K562 (cell line): ENCODE measurements at regions of chr1 and their contacts with region 1.

Region 1: DNA sequence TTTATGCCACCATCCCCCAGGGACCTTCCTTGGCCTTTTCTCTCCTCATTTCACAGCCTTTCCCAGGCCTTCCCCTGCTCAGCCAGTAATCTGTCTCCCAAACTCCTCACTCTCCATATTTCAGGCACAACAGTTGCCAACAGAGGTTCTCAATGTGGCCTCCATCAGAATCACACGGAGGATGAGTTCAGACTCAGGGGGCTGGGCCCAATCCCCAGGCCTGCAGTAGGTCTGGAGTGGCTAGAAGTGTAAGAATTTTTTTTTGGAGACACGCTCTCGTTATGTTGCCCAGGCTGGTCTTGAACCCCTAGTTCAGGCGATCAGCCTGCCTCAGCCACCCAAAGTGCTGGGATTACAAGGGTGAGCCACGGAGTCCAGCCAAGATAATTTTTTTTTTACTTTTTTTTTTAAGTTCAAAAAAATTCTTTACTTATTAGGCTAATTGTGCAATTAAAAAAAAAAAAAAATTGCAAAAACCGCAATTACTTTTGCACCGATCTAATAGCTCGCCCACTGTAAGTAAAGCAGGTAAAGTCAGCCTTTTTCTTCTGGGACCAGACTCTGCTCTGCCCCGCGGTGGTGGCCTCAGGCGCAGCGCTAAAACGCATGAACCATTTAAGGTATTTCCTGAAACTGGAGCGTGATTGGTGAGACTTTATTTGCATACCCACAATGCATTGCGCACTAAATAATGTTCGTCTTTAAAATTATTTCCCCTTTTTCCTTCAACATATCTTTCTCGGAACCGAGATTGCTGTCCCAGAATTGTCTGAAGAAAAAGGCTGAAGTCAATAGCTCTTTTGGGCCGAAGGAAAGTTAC is 18.7 kb downstream of the KIAA2013 start:
- DNase-seq: peak; percentile 86 to 98 (median 90)
- ATAC-seq: peak; percentile 72
- H3K4me3 ChIP-seq: no peak overlapping the region
- H3K27ac ChIP-seq: peak overlapping the region; percentile 100
- H3K4me1 ChIP-seq: peaks cover 15 to 27% of the 10 kb centered on the region in 2 experiments
- H3K27me3 ChIP-seq: no peaks in the 10 kb centered on the region
- CTCF ChIP-seq: peak; percentile 87 to 98 (median 96)
- EP300 ChIP-seq: no peak
- POLR2A ChIP-seq: no peak
- RAD21 ChIP-seq: peak; percentile 61 to 78

Region 2: DNA sequence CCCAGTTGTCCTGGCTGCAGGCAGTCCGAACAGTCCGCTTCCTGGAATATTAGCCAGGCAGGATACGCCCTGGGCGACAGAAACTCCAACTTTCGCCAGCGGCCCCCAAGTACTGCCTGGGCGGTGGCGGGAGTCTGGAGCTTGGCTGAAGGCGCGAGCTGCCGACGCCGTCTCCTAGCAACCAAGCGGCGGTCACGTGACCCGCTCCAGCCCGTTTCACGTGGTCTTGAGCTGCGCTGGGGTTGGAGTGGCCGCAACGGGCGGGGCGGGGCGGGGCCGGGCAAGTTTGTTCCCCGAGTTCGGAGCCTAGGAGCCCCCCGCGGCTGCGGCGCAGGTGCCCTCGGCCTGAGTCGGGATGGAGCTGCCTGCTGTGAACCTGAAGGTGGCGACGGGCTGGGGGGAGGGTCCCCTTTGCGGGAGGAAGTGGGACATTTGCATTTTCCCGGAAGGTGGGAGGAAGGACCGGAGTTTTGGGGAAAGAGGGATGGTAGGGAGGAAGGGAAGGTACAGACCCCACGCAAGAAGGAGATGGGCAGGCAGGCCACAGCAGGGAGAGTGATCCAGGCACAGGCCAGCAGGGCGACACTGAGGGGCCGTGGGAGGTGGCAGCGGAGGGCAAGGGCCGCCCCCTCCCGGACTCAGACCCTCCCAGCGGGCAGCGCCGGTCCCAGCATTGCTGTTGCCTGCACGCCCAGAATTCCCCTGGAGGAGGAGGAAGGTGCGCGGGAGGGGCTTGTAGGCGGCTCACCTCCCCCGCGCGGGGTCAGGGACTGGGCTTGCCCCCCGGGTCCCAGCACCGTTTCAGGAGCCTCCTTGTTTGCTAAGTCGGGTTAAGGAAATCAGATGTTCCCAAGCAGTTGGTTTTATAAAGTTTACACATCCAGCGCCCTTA is 171.4 kb before region 1 on chr1 and contains the start of gene AGTRAP:
- CTCF ChIA-PET with region 1: interaction called, 3 read pairs
- POLR2A ChIA-PET with region 1: interaction called, 23 read pairs
- in situ Hi-C with region 1: no loop called
- intact Hi-C with region 1: no loop called
- DNase-seq: peak; percentile 95 to 99 (median 96)
- ATAC-seq: peak; percentile 84
- H3K4me3 ChIP-seq: peak within 1 kb of the TSS; percentile 69
- H3K27ac ChIP-seq: peak within 1 kb of the TSS; percentile 91
- H3K4me1 ChIP-seq: peaks cover 49 to 50% of the 10 kb centered on the region in 2 experiments
- H3K27me3 ChIP-seq: no peaks in the 10 kb centered on the region
- CTCF ChIP-seq: peak; percentile 13 to 19 (median 18); a peak in 2 of 6 replicates
- EP300 ChIP-seq: peak; percentile 27; the same call in 1 of the 2 replicates
- POLR2A ChIP-seq: peak; percentile 81
- RAD21 ChIP-seq: no peak
- polyA plus RNA-seq, gene AGTRAP: 31.4 to 51.5 TPM

Region 3: GRCh38 chr1:11822096-11822495 is 85.4 kb before region 1 on chr1:
- CTCF ChIA-PET with region 1: interaction called, 5 read pairs
- POLR2A ChIA-PET with region 1: interaction called, 41 read pairs
- in situ Hi-C with region 1: no loop called
- intact Hi-C with region 1: no loop called
- DNase-seq: no peak
- ATAC-seq: no peak
- H3K4me3 ChIP-seq: no peak overlapping the region
- H3K27ac ChIP-seq: no peak overlapping the region
- H3K4me1 ChIP-seq: no peaks in the 10 kb centered on the region
- H3K27me3 ChIP-seq: no peaks in the 10 kb centered on the region
- CTCF ChIP-seq: no peak
- EP300 ChIP-seq: no peak
- POLR2A ChIP-seq: no peak
- RAD21 ChIP-seq: no peak

Region 4: GRCh38 chr1:11882814-11883538 is 24.5 kb before region 1 on chr1:
- CTCF ChIA-PET with region 1: interaction called, 3 read pairs
- POLR2A ChIA-PET with region 1: interaction called, 159 read pairs
- in situ Hi-C with region 1: no loop called
- intact Hi-C with region 1: loop called (anchors 1 kb)
- DNase-seq: peak; percentile 98 to 99 (median 98)
- ATAC-seq: peak; percentile 94
- H3K4me3 ChIP-seq: no peak overlapping the region
- H3K27ac ChIP-seq: peak overlapping the region; percentile 82
- H3K4me1 ChIP-seq: peaks cover 48 to 70% of the 10 kb centered on the region in 2 experiments
- H3K27me3 ChIP-seq: no peaks in the 10 kb centered on the region
- CTCF ChIP-seq: no peak
- EP300 ChIP-seq: peak; percentile 93
- POLR2A ChIP-seq: peak; percentile 75
- RAD21 ChIP-seq: peak in 1 of 2 experiments; percentile 47; a peak in 2 of 4 replicates

Region 5: GRCh38 chr1:11961230-11961629 is 53.7 kb after region 1 on chr1:
- CTCF ChIA-PET with region 1: no interaction called
- POLR2A ChIA-PET with region 1: interaction called, 112 read pairs
- in situ Hi-C with region 1: loop called (anchors 5 kb)
- intact Hi-C with region 1: no loop called
- DNase-seq: no peak
- ATAC-seq: no peak
- H3K4me3 ChIP-seq: no peak overlapping the region
- H3K27ac ChIP-seq: no peak overlapping the region
- H3K4me1 ChIP-seq: peaks cover 0 to 10% of the 10 kb centered on the region in 2 experiments; a peak in 1 of 5 replicates
- H3K27me3 ChIP-seq: no peaks in the 10 kb centered on the region
- CTCF ChIP-seq: no peak
- EP300 ChIP-seq: no peak
- POLR2A ChIP-seq: no peak
- RAD21 ChIP-seq: no peak

Region 6: DNA sequence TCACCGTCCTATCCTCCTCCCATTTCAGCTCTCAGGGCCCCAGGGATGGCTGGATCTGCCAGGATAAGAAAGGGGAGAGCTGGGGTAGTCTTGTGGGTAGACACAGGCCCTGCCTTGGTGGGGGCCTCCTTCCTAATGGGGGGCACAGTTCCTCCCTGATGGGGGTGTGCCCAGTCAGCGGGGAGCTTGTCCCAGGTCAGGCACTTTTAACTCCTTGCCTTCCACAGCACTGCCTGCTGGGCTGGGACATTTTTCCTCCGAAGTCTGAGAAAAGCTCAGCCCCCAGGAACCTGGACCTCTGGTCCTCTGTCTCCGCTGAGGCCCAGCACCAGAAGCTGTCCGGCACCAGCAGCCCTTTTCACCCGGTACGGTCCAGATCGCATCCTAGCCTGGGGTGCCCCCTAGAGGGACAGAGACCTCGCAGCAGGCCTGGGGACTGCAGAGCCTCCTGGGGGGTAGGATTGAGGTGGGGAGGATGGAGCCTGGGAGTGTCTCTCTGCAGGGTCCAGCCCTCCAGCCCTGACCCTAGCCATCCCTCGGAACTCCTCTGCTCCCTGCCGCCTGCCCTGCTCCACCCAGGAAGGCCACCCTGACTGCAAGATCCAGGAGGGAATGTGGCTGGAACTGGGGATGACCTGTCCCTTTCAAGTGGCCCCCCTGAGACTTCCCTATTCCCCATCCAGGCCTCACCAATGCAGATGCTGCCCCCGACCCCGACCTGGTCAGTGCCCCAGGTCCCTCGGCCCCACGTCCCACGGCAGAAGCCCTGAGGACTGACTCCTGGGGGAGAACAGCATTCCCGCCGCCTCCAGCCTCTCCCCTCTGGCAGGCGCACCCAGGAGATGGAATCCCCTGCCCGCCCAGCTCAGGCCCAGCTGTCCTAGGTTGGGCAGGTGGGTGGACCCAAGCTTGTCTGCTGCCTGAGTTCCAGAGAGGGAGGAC is 123.8 kb after region 1 on chr1:
- CTCF ChIA-PET with region 1: no interaction called
- POLR2A ChIA-PET with region 1: interaction called, 95 read pairs
- in situ Hi-C with region 1: no loop called
- intact Hi-C with region 1: loop called (anchors 2 kb)
- DNase-seq: peak; percentile 70 to 83 (median 80)
- ATAC-seq: peak; percentile 94
- H3K4me3 ChIP-seq: no peak overlapping the region
- H3K27ac ChIP-seq: no peak overlapping the region
- H3K4me1 ChIP-seq: peaks cover 8 to 34% of the 10 kb centered on the region in 2 experiments; a peak in 4 of 5 replicates
- H3K27me3 ChIP-seq: no peaks in the 10 kb centered on the region
- CTCF ChIP-seq: peak; percentile 88 to 91 (median 89)
- EP300 ChIP-seq: no peak
- POLR2A ChIP-seq: no peak
- RAD21 ChIP-seq: peak; percentile 80 to 90